ENCODE measurements at regions of chr1 and their contacts with region 1.

Region 1: GRCh38 chr1:26677306-26678115 is 18.3 kb upstream of the ARID1A start:
- DNase-seq: peak; percentile 88 to 94 (median 92)
- ATAC-seq: peak; percentile 99 to 100 (median 100)
- H3K4me3 ChIP-seq: peak overlapping the region in 1 of 4 donors; percentile 21
- H3K27ac ChIP-seq: peak overlapping the region in 3 of 4 donors; percentile 42 to 56 (median 43)
- H3K4me1 ChIP-seq: peaks cover 0 to 15% (median 0%) of the 10 kb centered on the region in 3 donors
- H3K27me3 ChIP-seq: no peaks in the 10 kb centered on the region
- CTCF ChIP-seq: peak; percentile 18 to 66 (median 56)

Region 2: GRCh38 chr1:26482921-26483680 is 194.4 kb before region 1 on chr1:
- intact Hi-C with region 1: no loop called
- DNase-seq: no peak
- ATAC-seq: no peak
- H3K4me3 ChIP-seq: no peak overlapping the region
- H3K27ac ChIP-seq: no peak overlapping the region
- H3K4me1 ChIP-seq: no peaks in the 10 kb centered on the region
- H3K27me3 ChIP-seq: no peaks in the 10 kb centered on the region
- CTCF ChIP-seq: no peak

Region 3: GRCh38 chr1:26799479-26800142 is 122.1 kb after region 1 on chr1:
- intact Hi-C with region 1: loop called in 1 of 3 experiments (anchors 10 kb)
- DNase-seq: no peak
- ATAC-seq: peak in 3 of 4 donors; percentile 49 to 86 (median 85)
- H3K4me3 ChIP-seq: no peak overlapping the region
- H3K27ac ChIP-seq: peak overlapping the region in 2 of 4 donors; percentile 62 to 63
- H3K4me1 ChIP-seq: no peaks in the 10 kb centered on the region
- H3K27me3 ChIP-seq: no peaks in the 10 kb centered on the region
- CTCF ChIP-seq: no peak

Measured in pancreas (tissue), 10 donors.